IMR-90 (cell line): ENCODE measurements at regions of chr3 and their contacts with region 1.

Region 1: GRCh38 chr3:124281453-124282316 is 289.8 kb upstream of the ROPN1 start:
- DNase-seq: peak; percentile 55
- ATAC-seq: peak; percentile 88
- H3K4me3 ChIP-seq: no peak overlapping the region
- H3K27ac ChIP-seq: no peak overlapping the region
- H3K4me1 ChIP-seq: no peaks in the 10 kb centered on the region; the same call in 1 of the 2 replicates
- H3K27me3 ChIP-seq: peaks cover 23% of the 10 kb centered on the region
- CTCF ChIP-seq: peak; percentile 67
- POLR2A ChIP-seq: no peak
- RAD21 ChIP-seq: peak; percentile 83

Region 2: DNA sequence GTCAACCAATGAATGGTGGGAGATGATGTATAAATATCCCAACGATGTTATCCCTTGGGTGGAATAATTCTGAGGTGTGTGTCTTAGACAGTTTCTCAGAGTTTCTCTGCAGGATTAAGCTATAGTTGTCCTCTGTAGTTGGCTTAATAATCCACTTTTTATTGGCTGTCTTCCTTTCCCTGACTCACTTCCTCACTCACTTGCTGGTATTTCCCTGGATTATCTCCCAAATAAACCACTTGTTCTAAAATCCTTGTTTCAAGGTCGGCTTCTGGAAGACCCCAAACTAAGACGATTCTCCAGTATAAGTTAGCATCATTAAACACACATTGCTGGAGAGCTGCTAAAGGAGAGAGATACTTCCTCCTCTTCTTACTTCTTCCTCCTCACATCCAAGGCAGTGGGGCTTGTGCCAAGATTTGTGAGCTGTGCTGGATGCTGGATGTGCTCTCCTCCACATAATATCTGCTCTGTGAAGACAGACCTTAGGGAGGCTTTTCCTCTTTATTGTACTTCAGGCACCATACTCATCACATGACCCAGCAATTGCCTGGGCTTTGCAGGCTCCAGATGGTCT is 267.2 kb before region 1 on chr3:
- CTCF ChIA-PET with region 1: interaction called, 7 read pairs
- POLR2A ChIA-PET with region 1: no interaction called
- dilution Hi-C with region 1: no loop called
- in situ Hi-C with region 1: loop called (anchors 5 kb)
- intact Hi-C with region 1: loop called (anchors 1 kb)
- DNase-seq: peak; percentile 17
- ATAC-seq: no peak
- H3K4me3 ChIP-seq: no peak overlapping the region
- H3K27ac ChIP-seq: no peak overlapping the region
- H3K4me1 ChIP-seq: no peaks in the 10 kb centered on the region
- H3K27me3 ChIP-seq: peaks cover 25% of the 10 kb centered on the region
- CTCF ChIP-seq: no peak
- POLR2A ChIP-seq: no peak
- RAD21 ChIP-seq: no peak

Region 3: DNA sequence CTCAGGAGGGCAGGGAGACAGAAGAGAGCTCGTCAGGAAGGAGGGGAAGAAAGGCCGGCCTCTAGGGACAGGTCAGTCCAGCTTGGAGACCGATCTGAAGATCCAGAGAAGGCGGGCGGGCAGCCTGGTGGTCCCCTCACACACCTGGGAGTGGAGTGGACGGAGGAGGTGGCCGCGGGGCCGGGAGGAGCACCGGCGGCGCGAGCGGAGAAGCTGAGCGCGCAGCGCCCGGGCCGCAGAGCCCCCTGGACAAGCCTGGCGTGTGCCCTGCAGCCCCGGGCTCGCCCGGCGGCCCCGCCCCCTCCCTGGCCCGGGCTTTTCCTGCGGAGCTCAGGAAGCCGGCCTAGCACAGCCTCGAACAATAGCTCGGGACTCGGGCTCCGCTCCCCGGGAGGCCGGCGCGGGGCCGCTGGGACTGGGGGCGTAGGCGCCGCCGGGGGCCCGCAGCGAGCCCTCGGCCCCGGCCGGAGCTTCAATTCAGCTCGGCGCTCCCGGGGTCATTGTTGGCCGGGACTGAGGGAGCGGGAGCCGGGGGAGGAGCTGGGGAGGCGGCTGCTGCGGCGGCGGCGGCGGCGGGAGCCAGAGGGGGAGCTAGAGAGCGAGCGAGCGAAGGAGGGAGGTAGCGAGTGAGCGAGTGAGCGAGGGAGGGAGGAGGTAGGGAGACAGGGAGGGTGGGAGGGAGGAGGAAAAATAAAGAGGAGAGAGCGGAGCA is 248.9 kb before region 1 on chr3:
- CTCF ChIA-PET with region 1: interaction called, 5 read pairs
- POLR2A ChIA-PET with region 1: no interaction called
- dilution Hi-C with region 1: no loop called
- in situ Hi-C with region 1: no loop called
- intact Hi-C with region 1: loop called (anchors 5 kb)
- DNase-seq: peak; percentile 71
- ATAC-seq: peak; percentile 98
- H3K4me3 ChIP-seq: peak overlapping the region; percentile 55
- H3K27ac ChIP-seq: peak overlapping the region; percentile 28; the same call in 1 of the 2 replicates
- H3K4me1 ChIP-seq: peaks cover 1% of the 10 kb centered on the region; the same call in 1 of the 2 replicates
- H3K27me3 ChIP-seq: peaks cover 32% of the 10 kb centered on the region
- CTCF ChIP-seq: peak; percentile 60
- POLR2A ChIP-seq: no peak
- RAD21 ChIP-seq: no peak

Region 4: GRCh38 chr3:124084022-124084881 is 197.4 kb before region 1 on chr3:
- CTCF ChIA-PET with region 1: no interaction called
- POLR2A ChIA-PET with region 1: no interaction called
- dilution Hi-C with region 1: no loop called
- in situ Hi-C with region 1: no loop called
- intact Hi-C with region 1: loop called (anchors 5 kb)
- DNase-seq: peak; percentile 20
- ATAC-seq: peak; percentile 61
- H3K4me3 ChIP-seq: no peak overlapping the region
- H3K27ac ChIP-seq: no peak overlapping the region
- H3K4me1 ChIP-seq: peaks cover 2% of the 10 kb centered on the region; the same call in 1 of the 2 replicates
- H3K27me3 ChIP-seq: peaks cover 7% of the 10 kb centered on the region
- CTCF ChIP-seq: no peak
- POLR2A ChIP-seq: no peak
- RAD21 ChIP-seq: no peak

Region 5: DNA sequence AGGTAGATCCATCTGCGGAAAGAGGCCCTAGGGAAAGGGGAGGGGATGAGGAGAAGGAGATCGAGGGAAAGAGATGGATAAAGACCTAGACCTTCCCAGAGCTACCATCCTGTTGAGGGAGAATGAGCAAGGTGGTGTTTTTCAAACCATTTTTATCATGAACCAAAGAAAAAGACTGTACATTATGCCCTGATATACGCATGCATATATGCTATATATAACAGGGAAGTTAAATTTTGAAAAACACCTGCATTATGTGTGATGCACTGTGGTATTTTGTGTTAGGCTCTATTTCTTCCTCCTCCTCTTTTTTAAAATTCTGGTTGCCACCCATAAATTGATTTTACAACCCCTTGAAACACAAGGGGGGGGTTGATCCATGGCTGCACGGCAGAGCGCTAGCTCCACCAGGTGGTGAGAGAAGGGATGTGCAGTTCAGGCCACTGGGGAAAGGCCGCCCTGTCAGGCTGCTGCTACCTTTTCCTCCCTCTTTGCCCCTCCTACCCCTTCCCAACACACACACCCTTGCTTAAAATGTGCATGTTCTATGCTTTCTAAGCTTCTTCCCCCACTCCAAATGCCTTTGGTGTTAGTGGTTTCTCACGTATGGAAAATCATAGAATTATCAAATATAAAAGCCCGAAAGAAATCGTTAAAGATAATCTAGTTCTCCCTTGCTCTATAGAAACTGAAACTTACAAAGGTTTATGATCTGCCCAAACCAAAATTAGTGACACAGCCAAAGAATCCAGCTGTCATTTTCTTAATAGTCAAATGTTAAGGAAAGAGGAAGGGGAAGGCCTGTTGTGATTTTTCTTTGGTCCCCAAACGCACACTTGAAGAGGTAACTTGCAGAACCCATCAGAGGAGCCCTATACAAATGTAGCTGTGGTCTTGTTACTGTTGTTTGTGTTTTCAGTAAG is 186.6 kb after region 1 on chr3:
- CTCF ChIA-PET with region 1: no interaction called
- POLR2A ChIA-PET with region 1: no interaction called
- dilution Hi-C with region 1: no loop called
- in situ Hi-C with region 1: no loop called
- intact Hi-C with region 1: loop called (anchors 5 kb)
- DNase-seq: peak; percentile 40
- ATAC-seq: peak; percentile 97
- H3K4me3 ChIP-seq: no peak overlapping the region
- H3K27ac ChIP-seq: no peak overlapping the region
- H3K4me1 ChIP-seq: no peaks in the 10 kb centered on the region
- H3K27me3 ChIP-seq: peaks cover 10% of the 10 kb centered on the region
- CTCF ChIP-seq: peak; percentile 97
- POLR2A ChIP-seq: peak; percentile 47; the same call in 1 of the 2 replicates
- RAD21 ChIP-seq: peak; percentile 99